ENCODE measurements at regions of chr17 and their contacts with region 1.

Region 1: DNA sequence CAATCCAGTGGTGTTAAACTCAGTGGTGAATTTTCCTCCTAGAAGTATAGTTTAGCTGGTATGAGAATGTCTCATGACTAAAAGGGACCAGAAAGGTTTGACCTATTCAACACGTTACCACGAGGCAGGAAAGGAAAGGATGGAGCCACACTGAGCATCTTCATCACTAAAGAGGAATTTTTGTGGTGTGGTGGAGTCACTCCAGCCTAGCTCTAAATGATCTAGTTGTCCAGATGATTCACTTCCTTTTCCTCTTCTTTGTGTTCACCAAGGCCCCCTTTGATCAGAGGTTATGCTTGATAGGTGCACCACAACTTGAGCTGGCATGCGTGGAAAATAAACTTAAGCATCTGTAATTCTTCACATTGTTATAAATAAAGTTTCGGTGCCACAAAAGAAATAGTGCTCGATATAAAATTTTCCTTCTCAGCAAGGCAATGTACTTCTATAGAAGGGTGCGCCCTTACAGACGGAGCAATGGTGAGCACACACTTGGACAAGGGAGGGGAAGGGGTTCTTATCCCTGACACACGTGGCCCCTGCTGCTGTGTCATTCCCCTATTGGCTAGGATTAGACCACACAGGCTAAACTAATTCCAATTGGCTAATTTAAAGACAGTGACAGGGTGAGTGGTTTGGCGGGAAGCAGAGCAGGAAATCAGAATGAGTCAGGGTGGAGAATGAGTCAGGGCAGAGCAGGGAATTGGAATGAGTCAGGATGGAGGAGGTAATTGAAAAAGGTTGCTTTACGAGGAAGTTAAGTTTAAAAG is 254.5 kb downstream of the HS3ST3A1 start:
- DNase-seq: peak; percentile 97
- H3K4me3 Mint-ChIP-seq: peak overlapping the region; percentile 67
- H3K27ac Mint-ChIP-seq: peak overlapping the region; percentile 83
- H3K4me1 Mint-ChIP-seq: peaks cover 55% of the 10 kb centered on the region
- H3K27me3 Mint-ChIP-seq: no peaks in the 10 kb centered on the region
- CTCF ChIP-seq: no peak

Region 2: GRCh38 chr17:13393841-13394710 is 46.9 kb after region 1 on chr17:
- CTCF ChIA-PET with region 1: interaction called, 3 read pairs
- POLR2A ChIA-PET with region 1: interaction called, 19 read pairs
- intact Hi-C with region 1: loop called (anchors 2 kb)
- DNase-seq: peak; percentile 95
- H3K4me3 Mint-ChIP-seq: no peak overlapping the region
- H3K27ac Mint-ChIP-seq: peak overlapping the region; percentile 65
- H3K4me1 Mint-ChIP-seq: peaks cover 27% of the 10 kb centered on the region
- H3K27me3 Mint-ChIP-seq: no peaks in the 10 kb centered on the region
- CTCF ChIP-seq: no peak

Region 3: GRCh38 chr17:13420878-13421277 is 73.7 kb after region 1 on chr17:
- CTCF ChIA-PET with region 1: no interaction called
- POLR2A ChIA-PET with region 1: interaction called, 8 read pairs
- intact Hi-C with region 1: loop called (anchors 2 kb)
- DNase-seq: peak; percentile 95
- H3K4me3 Mint-ChIP-seq: no peak overlapping the region
- H3K27ac Mint-ChIP-seq: peak overlapping the region; percentile 79
- H3K4me1 Mint-ChIP-seq: peaks cover 43% of the 10 kb centered on the region
- H3K27me3 Mint-ChIP-seq: no peaks in the 10 kb centered on the region
- CTCF ChIP-seq: no peak

Region 4: GRCh38 chr17:13544292-13544691 is 197.1 kb after region 1 on chr17:
- CTCF ChIA-PET with region 1: no interaction called
- POLR2A ChIA-PET with region 1: no interaction called
- intact Hi-C with region 1: loop called (anchors 5 kb)
- DNase-seq: peak; percentile 94
- H3K4me3 Mint-ChIP-seq: peak overlapping the region; percentile 51
- H3K27ac Mint-ChIP-seq: peak overlapping the region; percentile 67
- H3K4me1 Mint-ChIP-seq: peaks cover 27% of the 10 kb centered on the region
- H3K27me3 Mint-ChIP-seq: no peaks in the 10 kb centered on the region
- CTCF ChIP-seq: no peak

Region 5: DNA sequence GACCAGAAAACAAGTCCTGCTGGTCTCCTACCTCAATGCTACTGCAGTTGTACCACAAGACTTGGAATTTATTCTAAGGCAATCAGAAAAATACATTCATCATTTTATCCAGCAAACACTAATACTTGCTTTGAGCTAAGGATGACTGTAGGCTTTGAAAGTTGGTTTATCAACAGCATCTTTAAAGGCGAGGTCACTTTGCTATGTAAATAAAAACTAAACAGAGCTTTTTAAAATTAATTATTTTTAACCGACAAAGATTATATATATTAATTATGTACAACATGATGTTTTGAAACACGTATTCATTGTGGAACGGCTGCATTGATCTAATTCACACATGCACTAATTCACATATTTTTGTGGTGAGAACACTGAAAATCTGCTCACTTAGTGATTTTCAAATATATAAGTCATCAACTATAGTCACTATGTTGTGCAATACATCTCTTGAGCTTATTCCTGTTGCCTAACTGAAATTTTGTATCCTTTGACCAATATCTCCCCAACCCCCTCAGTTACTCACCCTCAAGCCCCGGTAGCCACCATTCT is 380.4 kb after region 1 on chr17:
- CTCF ChIA-PET with region 1: no interaction called
- POLR2A ChIA-PET with region 1: no interaction called
- intact Hi-C with region 1: loop called (anchors 2 kb)
- DNase-seq: peak; percentile 75
- H3K4me3 Mint-ChIP-seq: no peak overlapping the region
- H3K27ac Mint-ChIP-seq: peak overlapping the region; percentile 68
- H3K4me1 Mint-ChIP-seq: peaks cover 27% of the 10 kb centered on the region
- H3K27me3 Mint-ChIP-seq: no peaks in the 10 kb centered on the region
- CTCF ChIP-seq: no peak

Region 6: GRCh38 chr17:14203388-14203787 is 856.2 kb after region 1 on chr17:
- CTCF ChIA-PET with region 1: no interaction called
- POLR2A ChIA-PET with region 1: no interaction called
- intact Hi-C with region 1: loop called (anchors 5 kb)
- DNase-seq: no peak
- H3K4me3 Mint-ChIP-seq: no peak overlapping the region
- H3K27ac Mint-ChIP-seq: no peak overlapping the region
- H3K4me1 Mint-ChIP-seq: peaks cover 34% of the 10 kb centered on the region
- H3K27me3 Mint-ChIP-seq: no peaks in the 10 kb centered on the region
- CTCF ChIP-seq: no peak

Region 7: GRCh38 chr17:14926526-14927122 is 1579.4 kb after region 1 on chr17:
- CTCF ChIA-PET with region 1: no interaction called
- POLR2A ChIA-PET with region 1: no interaction called
- intact Hi-C with region 1: loop called (anchors 1 kb)
- DNase-seq: peak; percentile 83
- H3K4me3 Mint-ChIP-seq: no peak overlapping the region
- H3K27ac Mint-ChIP-seq: no peak overlapping the region
- H3K4me1 Mint-ChIP-seq: no peaks in the 10 kb centered on the region
- H3K27me3 Mint-ChIP-seq: peaks cover 14% of the 10 kb centered on the region
- CTCF ChIP-seq: peak; percentile 80